ENCODE measurements at regions of chr2 and their contacts with region 1.

Region 1: GRCh38 chr2:227324995-227325838 is at the start of gene MFF:
- DNase-seq: peak; percentile 92
- ATAC-seq: peak; percentile 97
- H3K4me3 ChIP-seq: peak within 1 kb of the TSS; percentile 94 to 98 (median 96)
- H3K27ac ChIP-seq: peak within 1 kb of the TSS; percentile 87
- H3K4me1 ChIP-seq: peaks cover 37% of the 10 kb centered on the region
- H3K27me3 ChIP-seq: no peaks in the 10 kb centered on the region
- CTCF ChIP-seq: peak; percentile 56
- EP300 ChIP-seq: peak in 1 of 2 experiments; percentile 80
- POLR2A ChIP-seq: peak; percentile 77 to 86
- RAD21 ChIP-seq: peak; percentile 75
- total RNA-seq, gene MFF: 156 and 170 TPM in 2 replicates

Region 2: GRCh38 chr2:227132986-227133385 is 192.2 kb before region 1 on chr2:
- CTCF ChIA-PET with region 1: no interaction called
- POLR2A ChIA-PET with region 1: no interaction called
- in situ Hi-C with region 1: no loop called
- intact Hi-C with region 1: loop called (anchors 5 kb)
- DNase-seq: no peak
- ATAC-seq: no peak
- H3K4me3 ChIP-seq: no peak overlapping the region
- H3K27ac ChIP-seq: no peak overlapping the region
- H3K4me1 ChIP-seq: no peaks in the 10 kb centered on the region
- H3K27me3 ChIP-seq: peaks cover 2 to 54% of the 10 kb centered on the region in 2 experiments; a peak in 3 of 5 replicates
- CTCF ChIP-seq: no peak
- EP300 ChIP-seq: no peak
- POLR2A ChIP-seq: no peak
- RAD21 ChIP-seq: no peak

Region 3: DNA sequence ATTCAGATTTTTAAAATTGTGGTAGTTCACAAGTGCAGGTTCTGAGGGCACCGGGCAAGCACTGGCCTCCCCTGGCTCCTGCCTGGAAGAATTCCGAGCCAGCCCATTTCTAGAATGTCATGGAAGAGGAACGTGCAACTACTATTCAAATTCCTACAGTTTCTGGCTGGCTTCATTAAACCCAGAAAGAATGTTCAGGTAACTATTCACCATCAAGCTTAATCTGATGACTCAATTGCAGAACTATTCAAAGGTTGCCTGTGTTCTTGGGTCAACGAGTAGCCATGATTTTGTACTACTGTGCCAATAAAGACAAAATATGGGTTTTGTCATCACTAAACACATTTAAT is 14.5 kb before region 1 on chr2:
- CTCF ChIA-PET with region 1: no interaction called
- POLR2A ChIA-PET with region 1: interaction called, 9 read pairs
- in situ Hi-C with region 1: no loop called
- intact Hi-C with region 1: loop called (anchors 2 kb)
- DNase-seq: peak; percentile 34
- ATAC-seq: no peak
- H3K4me3 ChIP-seq: no peak overlapping the region
- H3K27ac ChIP-seq: no peak overlapping the region
- H3K4me1 ChIP-seq: peaks cover 57% of the 10 kb centered on the region
- H3K27me3 ChIP-seq: no peaks in the 10 kb centered on the region
- CTCF ChIP-seq: no peak
- EP300 ChIP-seq: no peak
- POLR2A ChIP-seq: no peak
- RAD21 ChIP-seq: no peak

Region 4: DNA sequence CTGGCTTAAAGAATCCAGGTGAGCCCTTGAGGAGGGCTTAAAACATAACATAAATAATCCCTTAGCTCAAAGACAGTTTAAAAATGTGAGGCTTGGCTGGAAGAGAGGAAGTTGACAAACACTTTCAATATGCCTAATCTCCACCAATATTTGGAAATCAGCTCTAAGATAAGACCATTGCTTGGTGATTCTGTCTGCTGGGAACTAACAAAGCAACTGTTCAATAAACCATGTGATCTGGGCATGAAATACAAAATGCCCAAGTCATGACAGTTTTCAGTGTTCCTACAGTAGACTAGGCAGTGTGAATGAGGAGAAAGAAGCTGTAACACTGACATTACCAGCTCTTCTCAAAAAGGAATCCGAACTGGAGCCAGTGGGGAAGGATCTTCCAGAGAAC is 10.5 kb after region 1 on chr2:
- CTCF ChIA-PET with region 1: no interaction called
- POLR2A ChIA-PET with region 1: interaction called, 33 read pairs
- in situ Hi-C with region 1: no loop called
- intact Hi-C with region 1: no loop called
- DNase-seq: no peak
- ATAC-seq: no peak
- H3K4me3 ChIP-seq: no peak overlapping the region
- H3K27ac ChIP-seq: no peak overlapping the region
- H3K4me1 ChIP-seq: peaks cover 31% of the 10 kb centered on the region
- H3K27me3 ChIP-seq: no peaks in the 10 kb centered on the region
- CTCF ChIP-seq: no peak
- EP300 ChIP-seq: no peak
- POLR2A ChIP-seq: no peak
- RAD21 ChIP-seq: no peak

Measured in HepG2 (cell line).